Dendritic cell treated with granulocyte-macrophage colony-stimulating factor and Interleukin-4, amounts not matched to agents 40 ng/mL and 50 ng/mL, for 4 days (primary cell): ENCODE measurements at regions of chr14 and their contacts with region 1.

Region 1: GRCh38 chr14:50714450-50715073 is 46.5 kb upstream of the SAV1 start:
- H3K4me3 Mint-ChIP-seq: no peak overlapping the region
- H3K27ac Mint-ChIP-seq: no peak overlapping the region
- H3K4me1 Mint-ChIP-seq: no peaks in the 10 kb centered on the region
- H3K27me3 Mint-ChIP-seq: no peaks in the 10 kb centered on the region

Region 2: GRCh38 chr14:50619556-50620141 is 94.9 kb before region 1 on chr14:
- intact Hi-C with region 1: loop called (anchors 1 kb)
- H3K4me3 Mint-ChIP-seq: no peak overlapping the region
- H3K27ac Mint-ChIP-seq: no peak overlapping the region
- H3K4me1 Mint-ChIP-seq: no peaks in the 10 kb centered on the region
- H3K27me3 Mint-ChIP-seq: no peaks in the 10 kb centered on the region